GM12878 (cell line): ENCODE measurements at regions of chr4 and their contacts with region 1.

Region 1: GRCh38 chr4:174282836-174283506 is 496 bp downstream of the FBXO8 start:
- DNase-seq: peak; percentile 86
- ATAC-seq: peak; percentile 96
- H3K4me3 ChIP-seq: peak overlapping the region; percentile 96
- H3K27ac ChIP-seq: peak overlapping the region; percentile 99
- H3K4me1 ChIP-seq: peaks cover 7% of the 10 kb centered on the region; the same call in 1 of the 2 replicates
- H3K27me3 ChIP-seq: no peaks in the 10 kb centered on the region
- CTCF ChIP-seq: no peak
- EP300 ChIP-seq: no peak
- POLR2A ChIP-seq: no peak; the same call in 1 of the 2 replicates
- RAD21 ChIP-seq: no peak

Region 2: GRCh38 chr4:173370477-173371291 is 912.3 kb before region 1 on chr4 and contains the start of gene SAP30:
- CTCF ChIA-PET with region 1: no interaction called
- POLR2A ChIA-PET with region 1: interaction called, 3 read pairs
- RAD21 ChIA-PET with region 1: no interaction called
- SMC1A ChIA-PET with region 1: no interaction called
- in situ Hi-C with region 1: no loop called
- intact Hi-C with region 1: loop called (anchors 5 kb)
- DNase-seq: peak; percentile 89
- ATAC-seq: peak; percentile 86
- H3K4me3 ChIP-seq: peak within 1 kb of the TSS; percentile 99
- H3K27ac ChIP-seq: peak within 1 kb of the TSS; percentile 84
- H3K4me1 ChIP-seq: peaks cover 8% of the 10 kb centered on the region
- H3K27me3 ChIP-seq: no peaks in the 10 kb centered on the region
- CTCF ChIP-seq: no peak
- EP300 ChIP-seq: no peak
- POLR2A ChIP-seq: peak; percentile 97
- RAD21 ChIP-seq: no peak
- polyA plus RNA-seq, gene SAP30: 5.4 to 24.0 TPM

Region 3: GRCh38 chr4:174173360-174173759 is 109.6 kb before region 1 on chr4:
- CTCF ChIA-PET with region 1: no interaction called
- POLR2A ChIA-PET with region 1: no interaction called
- RAD21 ChIA-PET with region 1: no interaction called
- SMC1A ChIA-PET with region 1: no interaction called
- in situ Hi-C with region 1: no loop called
- intact Hi-C with region 1: no loop called
- DNase-seq: no peak
- ATAC-seq: no peak
- H3K4me3 ChIP-seq: no peak overlapping the region
- H3K27ac ChIP-seq: no peak overlapping the region
- H3K4me1 ChIP-seq: no peaks in the 10 kb centered on the region
- H3K27me3 ChIP-seq: no peaks in the 10 kb centered on the region
- CTCF ChIP-seq: no peak
- EP300 ChIP-seq: no peak
- POLR2A ChIP-seq: no peak
- RAD21 ChIP-seq: no peak

Region 4: DNA sequence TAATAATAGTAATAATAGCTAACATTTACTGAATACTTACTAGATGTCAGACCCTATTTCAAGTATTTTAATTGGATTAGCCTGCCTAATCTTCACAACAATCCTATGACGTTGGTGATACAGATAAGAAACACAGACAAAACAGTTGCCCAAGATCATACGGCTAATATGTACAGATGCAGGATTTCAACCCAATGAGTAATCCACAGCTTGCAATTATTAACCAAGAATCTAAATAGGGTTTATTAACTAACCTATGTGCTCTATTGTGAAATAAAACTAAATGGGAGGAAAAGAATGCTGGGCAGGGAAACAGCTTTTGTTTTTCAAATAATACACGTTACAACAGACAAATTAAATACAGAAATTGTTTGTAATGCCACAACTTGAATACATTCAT is 22.9 kb before region 1 on chr4:
- CTCF ChIA-PET with region 1: interaction called, 7 read pairs
- POLR2A ChIA-PET with region 1: interaction called, 21 read pairs
- RAD21 ChIA-PET with region 1: interaction called, 4 read pairs
- SMC1A ChIA-PET with region 1: interaction called, 45 read pairs
- in situ Hi-C with region 1: no loop called
- intact Hi-C with region 1: no loop called
- DNase-seq: no peak
- ATAC-seq: peak; percentile 68
- H3K4me3 ChIP-seq: no peak overlapping the region
- H3K27ac ChIP-seq: no peak overlapping the region
- H3K4me1 ChIP-seq: no peaks in the 10 kb centered on the region
- H3K27me3 ChIP-seq: no peaks in the 10 kb centered on the region
- CTCF ChIP-seq: no peak
- EP300 ChIP-seq: no peak
- POLR2A ChIP-seq: no peak
- RAD21 ChIP-seq: no peak

Region 5: DNA sequence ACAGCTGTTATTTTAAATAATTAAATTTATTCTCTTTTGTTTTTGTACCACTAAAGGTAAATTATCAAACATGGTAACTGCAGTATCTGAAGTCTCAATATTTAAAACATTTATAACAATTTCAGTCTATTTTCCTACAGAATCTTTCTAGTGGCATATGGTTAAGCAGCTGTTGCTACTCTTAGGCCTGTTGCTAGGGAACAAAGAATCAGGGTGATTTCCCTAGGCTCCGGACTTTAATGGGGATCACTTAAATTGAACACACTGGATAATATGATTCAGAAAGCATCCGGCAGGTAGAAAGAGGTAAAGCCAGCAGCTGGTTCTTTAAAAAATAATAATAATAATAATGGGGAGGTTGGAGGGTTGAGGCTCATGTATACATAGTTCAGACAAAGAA is 17.1 kb before region 1 on chr4:
- CTCF ChIA-PET with region 1: interaction called, 9 read pairs
- POLR2A ChIA-PET with region 1: interaction called, 21 read pairs
- RAD21 ChIA-PET with region 1: interaction called, 5 read pairs
- SMC1A ChIA-PET with region 1: interaction called, 45 read pairs
- in situ Hi-C with region 1: no loop called
- intact Hi-C with region 1: no loop called
- DNase-seq: no peak
- ATAC-seq: peak; percentile 70
- H3K4me3 ChIP-seq: no peak overlapping the region
- H3K27ac ChIP-seq: no peak overlapping the region; the same call in 1 of the 2 replicates
- H3K4me1 ChIP-seq: peaks cover 4% of the 10 kb centered on the region
- H3K27me3 ChIP-seq: no peaks in the 10 kb centered on the region
- CTCF ChIP-seq: no peak
- EP300 ChIP-seq: no peak
- POLR2A ChIP-seq: no peak
- RAD21 ChIP-seq: no peak

Region 6: GRCh38 chr4:174928174-174928573 is 645.2 kb after region 1 on chr4:
- CTCF ChIA-PET with region 1: no interaction called
- POLR2A ChIA-PET with region 1: no interaction called
- RAD21 ChIA-PET with region 1: no interaction called
- SMC1A ChIA-PET with region 1: no interaction called
- in situ Hi-C with region 1: loop called (anchors 10 kb)
- intact Hi-C with region 1: no loop called
- DNase-seq: peak; percentile 89
- ATAC-seq: peak; percentile 82
- H3K4me3 ChIP-seq: no peak overlapping the region
- H3K27ac ChIP-seq: peak overlapping the region; percentile 89
- H3K4me1 ChIP-seq: peaks cover 13% of the 10 kb centered on the region
- H3K27me3 ChIP-seq: no peaks in the 10 kb centered on the region
- CTCF ChIP-seq: no peak
- EP300 ChIP-seq: peak; percentile 63 to 97
- POLR2A ChIP-seq: no peak
- RAD21 ChIP-seq: no peak